A549 (cell line): ENCODE measurements at regions of chr2 and their contacts with region 1.

Region 1: DNA sequence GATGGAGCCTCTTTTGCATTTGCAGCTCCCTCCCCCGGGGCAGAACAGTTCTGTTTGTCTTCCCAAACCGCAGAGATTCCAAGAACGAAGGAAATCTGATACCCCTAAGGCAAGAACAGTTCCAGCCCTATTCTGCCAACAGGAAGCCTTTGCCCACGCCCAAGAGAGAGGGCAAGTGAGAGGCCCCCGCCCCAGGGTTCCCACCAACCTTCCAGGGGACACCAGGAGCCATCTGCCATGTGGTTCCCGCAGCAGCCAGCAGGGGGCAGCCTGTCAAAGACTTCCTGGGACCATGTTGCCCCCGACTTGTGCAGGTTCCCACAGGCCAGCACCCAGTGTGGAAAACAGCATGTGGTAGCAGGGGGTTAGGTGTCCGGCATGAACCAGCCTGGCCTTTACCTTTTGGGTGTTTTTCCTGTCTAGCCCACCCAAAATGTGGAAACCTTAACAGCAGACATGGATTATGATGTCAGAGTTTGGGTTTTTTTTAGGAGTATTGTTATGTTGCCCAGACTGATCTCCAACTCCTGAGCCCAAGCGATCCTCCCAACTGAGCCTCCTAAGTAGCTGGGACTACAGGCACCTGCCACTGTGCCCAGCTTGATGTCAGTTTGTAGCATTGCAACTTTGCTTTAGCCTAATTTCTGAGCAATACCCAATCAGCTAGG is 21.7 kb upstream of the EFHD1 start:
- DNase-seq: peak; percentile 52 to 73
- ATAC-seq: peak; percentile 64 to 85
- H3K4me3 ChIP-seq: no peak overlapping the region
- H3K27ac ChIP-seq: peak overlapping the region in 1 of 2 experiments; percentile 22; a peak in 1 of 6 replicates
- H3K4me1 ChIP-seq: 0 out of 3 replicates have a peak, but pooled peaks cover 2% of the 10 kb centered on the region
- CTCF ChIP-seq: peak; percentile 73
- EP300 ChIP-seq: no peak
- POLR2A ChIP-seq: no peak
- RAD21 ChIP-seq: peak; percentile 46 to 56; a peak in 4 of 5 replicates

Region 2: GRCh38 chr2:232576995-232577394 is 34.7 kb before region 1 on chr2:
- CTCF ChIA-PET with region 1: no interaction called
- POLR2A ChIA-PET with region 1: no interaction called
- DNase-seq: no peak
- ATAC-seq: no peak
- H3K4me3 ChIP-seq: no peak overlapping the region
- H3K27ac ChIP-seq: no peak overlapping the region
- H3K4me1 ChIP-seq: no peaks in the 10 kb centered on the region
- CTCF ChIP-seq: no peak
- EP300 ChIP-seq: no peak
- POLR2A ChIP-seq: no peak
- RAD21 ChIP-seq: no peak

Region 3: DNA sequence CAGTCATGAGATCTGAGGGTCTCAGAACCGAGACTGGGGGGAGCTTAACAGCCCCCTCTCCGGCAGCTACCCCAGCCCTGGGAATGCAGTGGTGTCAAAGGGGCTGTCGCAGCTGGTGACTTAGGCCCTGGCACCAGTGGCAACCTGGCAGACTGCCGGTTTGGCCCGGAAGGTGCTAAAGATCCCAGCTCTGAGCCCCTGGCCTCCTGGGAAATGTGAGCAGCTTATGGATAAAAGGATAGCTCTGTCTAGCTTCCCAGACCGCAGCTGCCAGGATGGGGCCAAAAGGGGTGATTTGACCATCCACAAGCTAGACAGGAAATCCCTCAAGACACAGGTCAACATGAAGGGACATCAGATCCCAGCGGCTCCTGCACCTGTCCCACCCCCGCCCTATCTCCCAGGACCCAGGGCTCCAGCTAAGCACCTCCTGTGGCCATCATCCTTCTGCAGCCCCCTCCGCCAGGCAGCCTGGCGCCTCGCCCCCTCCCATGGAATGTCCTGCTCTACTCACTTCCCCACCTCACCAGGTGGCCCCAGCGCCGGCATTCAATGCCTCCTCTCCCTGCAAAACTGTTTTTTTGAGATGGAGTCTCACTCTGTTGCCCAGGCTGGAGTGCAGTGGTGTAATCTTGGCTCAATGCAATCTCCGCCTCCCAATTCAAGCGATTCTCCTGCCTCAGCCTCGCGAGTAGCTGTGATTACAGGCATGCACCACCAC is 11.5 kb before region 1 on chr2:
- CTCF ChIA-PET with region 1: interaction called, 33 read pairs
- POLR2A ChIA-PET with region 1: no interaction called
- DNase-seq: no peak
- ATAC-seq: no peak
- H3K4me3 ChIP-seq: no peak overlapping the region
- H3K27ac ChIP-seq: no peak overlapping the region
- H3K4me1 ChIP-seq: no peaks in the 10 kb centered on the region
- CTCF ChIP-seq: no peak
- EP300 ChIP-seq: no peak
- POLR2A ChIP-seq: no peak
- RAD21 ChIP-seq: no peak

Region 4: GRCh38 chr2:232623783-232624727 is 12.4 kb after region 1 on chr2:
- CTCF ChIA-PET with region 1: interaction called, 21 read pairs
- POLR2A ChIA-PET with region 1: no interaction called
- DNase-seq: peak in 1 of 2 experiments; percentile 49
- ATAC-seq: peak; percentile 76 to 82
- H3K4me3 ChIP-seq: no peak overlapping the region
- H3K27ac ChIP-seq: peak overlapping the region in 1 of 2 experiments; percentile 36; a peak in 3 of 6 replicates
- H3K4me1 ChIP-seq: peaks cover 16% of the 10 kb centered on the region
- CTCF ChIP-seq: no peak
- EP300 ChIP-seq: no peak
- POLR2A ChIP-seq: no peak
- RAD21 ChIP-seq: no peak

Region 5: GRCh38 chr2:232910376-232910775 is 298.7 kb after region 1 on chr2:
- CTCF ChIA-PET with region 1: no interaction called
- POLR2A ChIA-PET with region 1: no interaction called
- DNase-seq: no peak
- ATAC-seq: no peak
- H3K4me3 ChIP-seq: no peak overlapping the region
- H3K27ac ChIP-seq: no peak overlapping the region
- H3K4me1 ChIP-seq: peaks cover 7% of the 10 kb centered on the region; the same call in 2 of the 3 replicates
- CTCF ChIP-seq: no peak
- EP300 ChIP-seq: no peak
- POLR2A ChIP-seq: no peak
- RAD21 ChIP-seq: no peak